Activated CD4-positive, alpha-beta T cell treated with anti-CD3 and anti-CD28 coated beads for 36 hours (primary cell): ENCODE measurements at regions of chr9 and their contacts with region 1.

Region 1: DNA sequence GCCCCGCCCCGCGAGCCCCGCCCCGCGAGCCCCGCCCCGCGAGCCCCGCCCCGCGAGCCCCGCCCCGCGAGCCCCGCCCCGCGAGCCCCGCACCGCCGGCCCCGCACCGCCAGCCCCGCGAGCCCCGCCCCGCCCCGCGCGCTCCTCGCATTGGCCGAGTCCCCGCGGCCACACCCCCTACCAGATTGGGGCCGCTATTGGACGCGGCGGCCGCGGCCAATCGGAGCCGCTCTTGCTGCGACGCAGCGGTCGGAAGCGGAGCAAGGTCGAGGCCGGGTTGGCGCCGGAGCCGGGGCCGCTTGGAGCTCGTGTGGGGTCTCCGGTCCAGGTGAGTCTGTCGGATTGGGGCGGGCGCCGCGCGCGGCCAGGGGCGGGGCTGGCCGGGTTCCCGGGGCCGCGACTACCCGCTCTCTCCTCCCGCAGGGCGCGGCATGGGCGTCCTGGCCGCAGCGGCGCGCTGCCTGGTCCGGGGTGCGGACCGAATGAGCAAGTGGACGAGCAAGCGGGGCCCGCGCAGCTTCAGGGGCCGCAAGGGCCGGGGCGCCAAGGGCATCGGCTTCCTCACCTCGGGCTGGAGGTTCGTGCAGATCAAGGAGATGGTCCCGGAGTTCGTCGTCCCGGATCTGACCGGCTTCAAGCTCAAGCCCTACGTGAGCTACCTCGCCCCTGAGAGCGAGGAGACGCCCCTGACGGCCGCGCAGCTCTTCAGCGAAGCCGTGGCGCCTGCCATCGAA is at the start of gene MRPL41:
- DNase-seq: peak; percentile 91
- ATAC-seq: peak; percentile 93
- H3K4me3 Mint-ChIP-seq: peak within 1 kb of the TSS; percentile 77
- H3K27ac Mint-ChIP-seq: peak within 1 kb of the TSS; percentile 63
- H3K4me1 Mint-ChIP-seq: peaks cover 11% of the 10 kb centered on the region
- H3K27me3 Mint-ChIP-seq: no peaks in the 10 kb centered on the region
- total RNA-seq, gene MRPL41: 20.9 to 26.8 TPM

Region 2: GRCh38 chr9:137254624-137255447 is 297.0 kb before region 1 on chr9 and contains the start of gene NELFB:
- CTCF ChIA-PET with region 1: no interaction called
- POLR2A ChIA-PET with region 1: no interaction called
- intact Hi-C with region 1: loop called in 1 of 2 experiments (anchors 1 kb)
- DNase-seq: peak; percentile 97
- ATAC-seq: peak; percentile 94
- H3K4me3 Mint-ChIP-seq: peak within 1 kb of the TSS; percentile 87
- H3K27ac Mint-ChIP-seq: peak within 1 kb of the TSS; percentile 81
- H3K4me1 Mint-ChIP-seq: peaks cover 18% of the 10 kb centered on the region
- H3K27me3 Mint-ChIP-seq: no peaks in the 10 kb centered on the region
- total RNA-seq, gene NELFB: 41.4 to 54.1 TPM

Region 3: GRCh38 chr9:137459147-137459600 is 92.6 kb before region 1 on chr9 and contains the start of gene NSMF:
- CTCF ChIA-PET with region 1: interaction called, 4 read pairs
- POLR2A ChIA-PET with region 1: no interaction called
- intact Hi-C with region 1: loop called in 1 of 2 experiments (anchors 1 kb)
- DNase-seq: peak; percentile 98
- ATAC-seq: peak; percentile 66
- H3K4me3 Mint-ChIP-seq: peak within 1 kb of the TSS; percentile 39
- H3K27ac Mint-ChIP-seq: peak within 1 kb of the TSS; percentile 78
- H3K4me1 Mint-ChIP-seq: peaks cover 33% of the 10 kb centered on the region
- H3K27me3 Mint-ChIP-seq: no peaks in the 10 kb centered on the region
- total RNA-seq, gene NSMF: 63.6 to 65.0 TPM

Region 4: DNA sequence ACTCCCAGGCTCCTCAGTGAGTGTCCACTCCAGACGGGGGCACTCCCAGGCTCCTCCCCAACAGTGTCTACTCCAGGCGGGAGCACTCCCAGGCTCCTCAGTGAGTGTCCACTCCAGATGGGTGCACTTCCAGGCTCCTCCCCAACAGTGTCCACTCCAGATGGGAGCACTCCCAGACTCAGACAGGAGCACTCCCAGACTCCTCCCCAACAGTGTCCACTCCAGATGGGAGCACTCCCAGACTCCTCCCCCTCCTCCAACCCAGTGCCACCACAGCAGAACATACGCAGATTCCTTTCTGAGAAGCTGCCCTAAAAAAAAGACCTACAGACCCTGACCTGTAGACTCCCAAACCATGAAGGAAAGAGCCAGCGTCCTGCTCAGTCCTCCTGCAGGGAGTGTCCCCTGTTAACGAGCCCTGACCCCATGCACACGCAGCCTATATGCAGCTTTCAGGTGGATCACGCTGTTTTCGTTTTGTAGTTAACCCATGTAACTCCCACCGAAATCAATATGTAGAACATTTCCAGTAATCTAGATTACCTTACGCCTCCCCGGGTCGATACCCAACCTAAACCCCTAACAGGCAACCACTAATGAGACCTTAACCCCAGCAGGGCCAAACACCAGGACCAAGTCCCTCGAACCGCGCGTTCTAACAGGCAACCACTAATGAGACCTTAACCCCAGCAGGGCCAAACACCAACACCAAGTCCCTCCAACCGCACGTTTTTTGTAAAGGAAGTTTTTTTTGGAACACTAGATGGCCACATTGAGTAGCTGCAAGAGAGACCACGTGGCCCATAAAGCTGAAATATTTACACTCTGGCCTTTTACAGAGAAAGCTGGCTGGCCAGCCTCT is 17.3 kb before region 1 on chr9:
- CTCF ChIA-PET with region 1: interaction called, 6 read pairs
- POLR2A ChIA-PET with region 1: interaction called, 6 read pairs
- intact Hi-C with region 1: loop called in 1 of 2 experiments (anchors 2 kb)
- DNase-seq: peak; percentile 32
- ATAC-seq: peak; percentile 86
- H3K4me3 Mint-ChIP-seq: no peak overlapping the region
- H3K27ac Mint-ChIP-seq: peak overlapping the region; percentile 73
- H3K4me1 Mint-ChIP-seq: peaks cover 27% of the 10 kb centered on the region
- H3K27me3 Mint-ChIP-seq: no peaks in the 10 kb centered on the region

Region 5: GRCh38 chr9:137590462-137591383 is 38.9 kb after region 1 on chr9 and contains the start of gene ZMYND19:
- CTCF ChIA-PET with region 1: no interaction called
- POLR2A ChIA-PET with region 1: interaction called, 5 read pairs
- intact Hi-C with region 1: loop called (anchors 1 to 2 kb)
- DNase-seq: peak; percentile 94
- ATAC-seq: peak; percentile 97
- H3K4me3 Mint-ChIP-seq: peak within 1 kb of the TSS; percentile 87
- H3K27ac Mint-ChIP-seq: peak within 1 kb of the TSS; percentile 95
- H3K4me1 Mint-ChIP-seq: peaks cover 17% of the 10 kb centered on the region
- H3K27me3 Mint-ChIP-seq: no peaks in the 10 kb centered on the region
- total RNA-seq, gene ZMYND19: 36.2 to 43.0 TPM